WTC11 (cell line): ENCODE measurements at regions of chr19 and their contacts with region 1.

Region 1: GRCh38 chr19:46392243-46392801 is 21.0 kb downstream of the CCDC8 start:
- DNase-seq: no peak
- ATAC-seq: no peak
- H3K4me3 Mint-ChIP-seq: no peak overlapping the region
- H3K27ac Mint-ChIP-seq: peak overlapping the region; percentile 78; the same call in 1 of the 2 replicates
- H3K4me1 Mint-ChIP-seq: peaks cover 5% of the 10 kb centered on the region
- H3K27me3 Mint-ChIP-seq: no peaks in the 10 kb centered on the region
- CTCF ChIP-seq: no peak

Region 2: GRCh38 chr19:46346821-46347571 is 45.3 kb before region 1 on chr19 and contains the start of gene PPP5C:
- CTCF ChIA-PET with region 1: interaction called, 10 read pairs
- POLR2A ChIA-PET with region 1: no interaction called
- DNase-seq: peak; percentile 92
- ATAC-seq: peak; percentile 84
- H3K4me3 Mint-ChIP-seq: peak within 1 kb of the TSS; percentile 92
- H3K27ac Mint-ChIP-seq: peak within 1 kb of the TSS; percentile 94
- H3K4me1 Mint-ChIP-seq: peaks cover 52% of the 10 kb centered on the region
- H3K27me3 Mint-ChIP-seq: no peaks in the 10 kb centered on the region
- CTCF ChIP-seq: peak; percentile 60; the same call in 1 of the 2 replicates
- total RNA-seq, gene PPP5C: 98.9 to 107 TPM (median 103 TPM) in 3 replicates

Region 3: DNA sequence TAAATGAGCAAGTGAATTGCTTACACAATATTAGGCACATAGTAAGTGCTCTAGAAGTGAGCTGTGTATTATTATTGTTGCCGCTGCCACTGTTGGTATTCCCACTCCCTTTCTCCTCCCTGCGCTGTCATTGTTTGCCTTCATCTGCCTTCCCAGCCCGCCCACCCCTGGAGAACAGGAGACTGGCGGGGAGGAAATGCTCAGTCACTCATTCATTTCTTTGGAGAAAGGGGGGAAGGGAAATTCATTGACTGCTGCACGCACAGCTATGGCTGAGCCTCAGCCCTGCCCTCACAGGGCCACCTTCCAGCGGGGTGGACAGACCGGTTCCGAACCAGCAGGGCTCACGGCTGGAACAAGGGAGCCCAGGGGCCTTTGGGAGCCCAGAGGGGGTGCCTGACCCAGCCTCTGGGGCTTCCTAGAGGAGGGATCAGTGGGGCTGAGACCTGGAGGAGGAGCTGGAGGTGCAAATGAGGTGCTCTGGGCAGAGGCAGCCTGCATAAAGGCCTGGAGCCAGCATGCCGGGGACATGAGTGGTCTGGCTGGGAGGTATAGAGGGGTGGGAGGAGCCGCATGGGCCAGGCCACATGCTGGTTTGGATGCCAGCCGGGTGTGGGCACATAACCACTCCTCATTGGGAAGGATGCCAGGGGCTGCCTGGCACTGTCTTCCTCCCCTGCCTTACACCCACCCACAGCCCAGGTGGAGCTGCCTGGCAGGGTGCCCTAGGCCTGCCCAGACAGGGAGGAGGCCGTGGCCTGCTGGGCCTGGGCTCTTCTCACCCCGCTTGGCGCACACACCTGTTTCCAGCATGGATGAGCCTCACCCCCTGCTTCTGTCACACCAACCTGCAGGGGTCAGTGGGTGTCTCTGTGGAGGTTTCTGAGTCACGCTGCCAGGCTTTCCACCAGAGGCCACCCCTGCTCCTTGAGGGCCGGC is 18.6 kb before region 1 on chr19:
- CTCF ChIA-PET with region 1: interaction called, 12 read pairs
- POLR2A ChIA-PET with region 1: no interaction called
- DNase-seq: peak; percentile 61
- ATAC-seq: peak; percentile 86
- H3K4me3 Mint-ChIP-seq: peak overlapping the region; percentile 40
- H3K27ac Mint-ChIP-seq: peak overlapping the region; percentile 97
- H3K4me1 Mint-ChIP-seq: peaks cover 39% of the 10 kb centered on the region
- H3K27me3 Mint-ChIP-seq: no peaks in the 10 kb centered on the region
- CTCF ChIP-seq: no peak

Region 4: GRCh38 chr19:46404055-46404752 is 11.9 kb after region 1 on chr19:
- CTCF ChIA-PET with region 1: interaction called, 23 read pairs
- POLR2A ChIA-PET with region 1: interaction called, 6 read pairs
- DNase-seq: no peak
- ATAC-seq: peak; percentile 20
- H3K4me3 Mint-ChIP-seq: peak overlapping the region; percentile 77
- H3K27ac Mint-ChIP-seq: peak overlapping the region; percentile 1
- H3K4me1 Mint-ChIP-seq: peaks cover 57% of the 10 kb centered on the region
- H3K27me3 Mint-ChIP-seq: peaks cover 40% of the 10 kb centered on the region
- CTCF ChIP-seq: no peak; the same call in 1 of the 2 replicates

Region 5: DNA sequence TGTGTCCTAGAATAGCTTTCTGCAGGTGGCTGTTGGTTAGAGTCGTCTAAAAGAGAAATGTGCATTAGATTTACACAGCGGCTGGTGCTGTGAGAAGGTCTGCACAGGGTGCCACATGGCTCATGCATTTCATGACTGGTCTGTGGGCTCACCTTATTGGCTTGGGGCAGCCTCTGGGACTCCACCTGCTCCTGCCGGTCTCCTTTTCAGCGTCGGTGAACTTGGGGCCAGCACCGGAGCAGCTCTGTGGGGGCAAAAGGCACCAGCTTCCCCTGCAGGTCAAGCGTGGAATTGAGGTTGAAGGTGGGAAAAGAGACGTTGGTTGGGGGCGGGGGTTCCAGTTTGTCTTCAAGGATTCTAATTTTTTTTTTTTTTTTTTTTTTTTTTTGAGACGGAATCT is 39.5 kb after region 1 on chr19:
- CTCF ChIA-PET with region 1: interaction called, 12 read pairs
- POLR2A ChIA-PET with region 1: no interaction called
- DNase-seq: peak; percentile 75
- ATAC-seq: peak; percentile 76
- H3K4me3 Mint-ChIP-seq: no peak overlapping the region
- H3K27ac Mint-ChIP-seq: no peak overlapping the region
- H3K4me1 Mint-ChIP-seq: peaks cover 22% of the 10 kb centered on the region
- H3K27me3 Mint-ChIP-seq: peaks cover 29% of the 10 kb centered on the region
- CTCF ChIP-seq: peak; percentile 40

Region 6: GRCh38 chr19:46487802-46488445 is 95.6 kb after region 1 on chr19:
- CTCF ChIA-PET with region 1: interaction called, 71 read pairs
- POLR2A ChIA-PET with region 1: interaction called, 4 read pairs
- DNase-seq: peak; percentile 91
- ATAC-seq: peak; percentile 66
- H3K4me3 Mint-ChIP-seq: peak overlapping the region; percentile 76
- H3K27ac Mint-ChIP-seq: no peak overlapping the region
- H3K4me1 Mint-ChIP-seq: peaks cover 38% of the 10 kb centered on the region
- H3K27me3 Mint-ChIP-seq: peaks cover 73% of the 10 kb centered on the region
- CTCF ChIP-seq: peak; percentile 74